A549 (cell line): ENCODE measurements at regions of chr12 and their contacts with region 1.

Region 1: DNA sequence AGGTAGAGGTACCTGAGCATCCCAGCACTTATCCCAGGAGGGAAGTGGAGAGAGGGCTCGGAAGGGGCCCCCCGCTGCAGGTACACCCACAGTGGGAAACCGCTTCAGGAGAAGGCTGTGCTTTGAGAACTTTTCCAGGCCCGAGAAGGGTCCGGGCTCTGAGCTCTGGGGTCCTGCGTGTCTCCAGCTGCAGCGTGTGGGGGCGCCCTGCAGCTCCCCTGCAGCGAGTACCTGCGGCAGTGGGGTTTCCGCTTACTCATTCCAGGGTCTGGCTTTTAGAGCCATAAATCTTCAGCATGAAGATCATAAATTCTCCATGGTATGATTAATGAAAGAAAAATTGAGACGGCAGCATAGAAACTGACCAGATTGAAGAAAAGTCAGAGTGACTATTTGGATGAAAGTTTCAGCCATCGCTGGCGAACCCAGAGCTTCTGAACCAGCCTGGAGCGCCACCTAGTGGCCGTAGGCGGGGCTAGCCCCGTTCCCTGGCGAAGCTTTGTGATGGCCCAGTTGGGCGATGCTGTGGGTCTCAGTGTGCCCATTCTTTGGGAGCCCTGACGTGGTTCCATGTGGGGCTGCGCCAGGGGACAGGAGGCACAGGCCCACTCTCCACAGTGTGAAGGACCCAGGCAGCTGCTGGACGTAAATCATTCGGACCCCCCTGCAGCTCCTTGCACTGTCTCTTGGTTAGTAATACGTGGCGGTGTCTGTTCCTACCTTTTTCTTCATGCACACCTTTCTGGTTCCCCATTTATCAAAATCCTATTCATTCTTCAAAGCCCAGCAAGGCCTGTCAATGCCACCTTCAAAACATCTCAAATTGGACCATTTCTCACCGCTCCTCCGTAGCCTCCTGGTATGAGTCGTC is 198.2 kb downstream of the TSPAN9 start:
- DNase-seq: peak; percentile 62 to 69
- ATAC-seq: peak; percentile 75 to 92
- H3K4me3 ChIP-seq: no peak overlapping the region
- H3K27ac ChIP-seq: no peak overlapping the region
- H3K4me1 ChIP-seq: peaks cover 10% of the 10 kb centered on the region
- CTCF ChIP-seq: peak; percentile 94
- EP300 ChIP-seq: no peak
- POLR2A ChIP-seq: no peak
- RAD21 ChIP-seq: peak; percentile 92

Region 2: DNA sequence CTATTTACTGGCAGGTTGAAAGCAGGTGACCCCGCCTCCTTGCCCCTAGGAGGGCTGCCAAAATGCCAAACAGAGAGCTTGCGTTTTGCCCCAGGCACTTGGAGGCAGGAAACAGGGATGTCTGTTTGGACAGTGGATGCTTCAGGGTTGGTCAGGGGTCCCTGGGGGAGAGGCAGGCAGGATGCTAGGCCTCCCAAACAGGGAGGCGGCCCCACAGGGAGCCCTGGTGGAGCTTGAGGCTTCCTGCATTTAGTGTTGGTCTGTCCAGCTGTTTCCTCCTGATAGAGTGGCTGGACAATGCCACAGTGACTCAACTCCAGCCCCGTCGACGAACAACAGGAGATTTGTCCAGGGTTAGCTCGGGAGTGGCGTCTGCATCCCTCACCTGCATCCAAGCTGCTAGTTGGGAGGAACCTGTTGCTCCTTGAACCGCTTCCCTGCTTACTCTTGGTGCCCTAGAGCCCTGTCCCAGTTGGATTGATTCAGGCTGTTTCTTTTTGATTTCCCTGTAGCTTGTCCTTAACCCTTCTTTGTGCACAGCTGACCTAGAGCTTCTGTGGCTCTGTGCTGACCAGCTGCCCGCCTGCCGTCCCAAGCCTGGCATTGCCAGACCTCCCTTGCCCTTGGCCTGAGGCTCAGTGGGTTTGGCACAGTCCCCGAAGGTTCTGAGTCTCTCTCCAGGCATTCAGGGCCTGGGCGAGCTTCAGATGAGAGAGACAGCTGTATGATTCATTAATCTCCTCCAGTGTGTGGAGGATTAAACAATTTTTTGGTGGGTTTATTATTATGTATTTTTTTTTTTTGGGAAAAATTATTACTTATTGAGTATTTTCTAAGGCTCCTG is 152.3 kb before region 1 on chr12:
- CTCF ChIA-PET with region 1: interaction called, 12 read pairs
- POLR2A ChIA-PET with region 1: no interaction called
- DNase-seq: no peak
- ATAC-seq: peak; percentile 31 to 42; a peak in 3 of 6 replicates
- H3K4me3 ChIP-seq: no peak overlapping the region
- H3K27ac ChIP-seq: no peak overlapping the region
- H3K4me1 ChIP-seq: no peaks in the 10 kb centered on the region
- CTCF ChIP-seq: no peak
- EP300 ChIP-seq: no peak
- POLR2A ChIP-seq: no peak
- RAD21 ChIP-seq: no peak

Region 3: GRCh38 chr12:3150931-3151835 is 124.2 kb before region 1 on chr12:
- CTCF ChIA-PET with region 1: interaction called, 36 read pairs
- POLR2A ChIA-PET with region 1: no interaction called
- DNase-seq: no peak
- ATAC-seq: no peak
- H3K4me3 ChIP-seq: no peak overlapping the region
- H3K27ac ChIP-seq: no peak overlapping the region
- H3K4me1 ChIP-seq: no peaks in the 10 kb centered on the region
- CTCF ChIP-seq: no peak
- EP300 ChIP-seq: no peak
- POLR2A ChIP-seq: no peak
- RAD21 ChIP-seq: no peak

Region 4: DNA sequence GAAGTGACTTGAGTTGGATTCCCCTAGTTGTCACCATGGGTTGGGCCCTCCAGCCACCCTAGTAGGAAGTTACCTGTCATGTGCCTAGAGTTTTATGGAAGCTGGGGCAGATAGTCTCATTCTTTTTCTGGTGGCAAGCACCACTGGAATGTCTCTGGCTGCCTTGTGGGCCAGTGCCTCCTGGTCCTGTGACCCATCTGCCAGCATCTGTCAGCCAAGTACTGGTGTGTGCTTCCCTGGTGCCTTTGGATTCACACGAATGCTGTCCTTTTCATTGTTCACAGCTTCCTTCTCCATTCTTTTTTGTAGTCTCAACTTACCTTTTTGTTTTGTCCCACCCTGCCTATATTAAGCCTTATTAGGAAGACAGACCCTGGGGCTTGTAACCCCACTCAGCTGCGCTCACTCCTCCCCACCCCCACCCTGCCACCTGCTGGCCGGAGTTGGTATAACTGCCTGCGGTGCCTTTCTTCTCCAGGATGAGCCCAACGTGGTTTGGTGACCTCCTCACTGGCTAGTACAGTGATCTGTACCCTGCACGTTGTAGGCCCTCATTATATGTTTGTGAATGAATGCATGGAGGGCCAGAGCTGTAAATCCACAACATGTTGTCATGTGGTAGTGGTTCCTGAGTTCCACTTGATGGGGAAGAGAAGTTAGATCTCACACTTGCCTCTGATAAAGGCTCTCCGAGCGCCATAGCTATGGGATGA is 72.5 kb before region 1 on chr12:
- CTCF ChIA-PET with region 1: interaction called, 51 read pairs
- POLR2A ChIA-PET with region 1: no interaction called
- DNase-seq: peak; percentile 47 to 84
- ATAC-seq: peak; percentile 25 to 62; a peak in 3 of 6 replicates
- H3K4me3 ChIP-seq: no peak overlapping the region
- H3K27ac ChIP-seq: no peak overlapping the region
- H3K4me1 ChIP-seq: peaks cover 4% of the 10 kb centered on the region; the same call in 1 of the 3 replicates
- CTCF ChIP-seq: peak; percentile 87
- EP300 ChIP-seq: no peak
- POLR2A ChIP-seq: no peak
- RAD21 ChIP-seq: peak; percentile 64 to 66

Region 5: DNA sequence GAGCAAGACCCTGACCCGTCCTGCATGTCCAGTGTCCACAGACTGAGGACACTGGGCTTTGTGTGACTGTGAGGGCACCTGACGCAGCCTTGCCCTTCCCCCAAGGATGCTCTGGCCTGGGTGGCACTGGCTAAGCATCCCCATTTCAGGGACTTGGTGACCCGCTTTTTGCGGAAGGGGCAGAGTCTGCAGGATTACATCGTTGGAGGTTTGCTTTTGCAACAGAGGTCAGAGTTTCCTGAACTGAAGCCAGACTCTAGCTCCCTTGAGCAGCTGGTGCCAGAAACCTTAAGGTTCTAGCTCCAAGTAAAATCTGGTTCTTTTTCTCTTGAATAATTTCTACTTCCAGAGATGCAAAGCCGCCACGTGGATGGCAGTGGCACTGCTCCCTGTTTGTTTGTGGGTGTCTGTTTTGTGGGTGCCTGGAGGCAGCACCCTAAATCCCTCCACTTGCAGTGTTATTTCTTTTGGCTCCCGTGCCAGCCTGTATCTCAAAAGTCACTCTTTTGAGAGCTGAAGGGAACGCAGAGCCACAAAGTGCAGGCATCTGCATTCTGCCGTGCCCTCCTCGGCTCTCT is 13.5 kb before region 1 on chr12:
- CTCF ChIA-PET with region 1: interaction called, 59 read pairs
- POLR2A ChIA-PET with region 1: no interaction called
- DNase-seq: no peak
- ATAC-seq: no peak
- H3K4me3 ChIP-seq: no peak overlapping the region
- H3K27ac ChIP-seq: no peak overlapping the region
- H3K4me1 ChIP-seq: no peaks in the 10 kb centered on the region
- CTCF ChIP-seq: no peak
- EP300 ChIP-seq: no peak
- POLR2A ChIP-seq: no peak
- RAD21 ChIP-seq: no peak

Region 6: GRCh38 chr12:3307389-3307788 is 32.0 kb after region 1 on chr12:
- CTCF ChIA-PET with region 1: no interaction called
- POLR2A ChIA-PET with region 1: no interaction called
- DNase-seq: no peak
- ATAC-seq: no peak
- H3K4me3 ChIP-seq: no peak overlapping the region
- H3K27ac ChIP-seq: no peak overlapping the region
- H3K4me1 ChIP-seq: 0 out of 3 replicates have a peak, but pooled peaks cover 3% of the 10 kb centered on the region
- CTCF ChIP-seq: no peak
- EP300 ChIP-seq: no peak
- POLR2A ChIP-seq: no peak
- RAD21 ChIP-seq: no peak